B cell (primary cell): ENCODE measurements at regions of chr13 and their contacts with region 1.

Region 1: GRCh38 chr13:99374994-99375737 is 68.0 kb upstream of the GPR183 start:
- DNase-seq: peak; percentile 96
- ATAC-seq: peak; percentile 78
- H3K4me3 ChIP-seq: peak overlapping the region in 4 of 5 experiments; percentile 9 to 42 (median 34)
- H3K4me3 Mint-ChIP-seq: peak overlapping the region; percentile 77
- H3K27ac ChIP-seq: peak overlapping the region; percentile 99 to 100
- H3K27ac Mint-ChIP-seq: peak overlapping the region; percentile 98
- H3K4me1 ChIP-seq: peaks cover 77 to 90% of the 10 kb centered on the region in 2 donors
- H3K4me1 Mint-ChIP-seq: peaks cover 86% of the 10 kb centered on the region
- H3K27me3 ChIP-seq: no peaks in the 10 kb centered on the region
- H3K27me3 Mint-ChIP-seq: no peaks in the 10 kb centered on the region
- CTCF ChIP-seq: no peak

Region 2: DNA sequence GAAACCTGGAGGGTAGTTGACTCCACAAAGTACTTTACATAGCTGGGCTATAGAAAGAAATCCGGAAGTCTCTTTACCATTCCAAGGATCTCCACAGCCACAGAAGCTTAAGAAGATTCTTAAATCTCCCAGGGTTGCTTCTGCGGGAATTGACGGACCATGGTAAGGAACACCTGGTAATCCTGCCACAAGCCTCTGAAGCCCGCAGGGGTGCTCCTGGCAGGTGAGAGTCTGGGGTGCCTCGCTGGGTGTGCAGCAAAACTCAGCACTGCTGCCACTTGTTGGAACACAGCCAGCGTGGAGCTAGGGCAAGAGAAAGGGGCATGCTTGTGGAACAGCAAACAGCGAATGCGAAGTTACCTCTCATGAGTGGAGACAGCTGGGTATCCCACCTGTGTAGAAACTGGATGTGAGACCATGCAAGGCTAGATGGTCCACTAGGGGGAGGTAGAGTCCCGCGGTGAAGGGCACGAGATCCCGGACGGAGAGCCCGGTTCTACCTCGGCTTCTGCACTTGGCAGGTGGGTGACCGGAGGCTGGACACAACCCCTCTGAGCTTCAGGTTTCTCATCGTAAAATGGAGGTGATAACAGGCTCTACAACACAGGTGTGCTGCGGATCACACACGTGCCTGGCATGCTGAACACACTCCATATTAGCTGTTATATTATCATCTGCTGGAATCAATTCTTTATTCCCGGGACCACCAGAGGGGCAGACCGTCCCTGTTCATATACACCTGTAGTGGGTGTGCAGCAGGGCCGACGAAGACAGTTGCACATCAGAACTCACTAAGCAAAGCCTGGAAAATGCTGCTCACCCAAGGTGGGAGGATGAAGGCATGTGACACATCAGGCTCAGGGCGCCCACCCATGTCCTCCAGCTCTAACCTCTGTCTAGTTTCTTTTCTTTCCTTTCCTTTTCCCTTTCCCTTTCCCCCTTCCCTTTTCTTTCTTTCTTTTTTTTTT is 198.6 kb before region 1 on chr13:
- CTCF ChIA-PET with region 1: interaction called, 13 read pairs
- POLR2A ChIA-PET with region 1: interaction called, 3 read pairs
- intact Hi-C with region 1: no loop called
- DNase-seq: peak; percentile 88
- ATAC-seq: peak; percentile 84
- H3K4me3 ChIP-seq: no peak overlapping the region
- H3K4me3 Mint-ChIP-seq: peak overlapping the region; percentile 58
- H3K27ac ChIP-seq: no peak overlapping the region
- H3K27ac Mint-ChIP-seq: peak overlapping the region; percentile 72
- H3K4me1 ChIP-seq: peaks cover 37 to 43% of the 10 kb centered on the region in 2 donors
- H3K4me1 Mint-ChIP-seq: peaks cover 39% of the 10 kb centered on the region
- H3K27me3 ChIP-seq: no peaks in the 10 kb centered on the region
- H3K27me3 Mint-ChIP-seq: no peaks in the 10 kb centered on the region
- CTCF ChIP-seq: peak; percentile 96

Region 3: GRCh38 chr13:99296398-99296797 is 78.8 kb before region 1 on chr13:
- CTCF ChIA-PET with region 1: interaction called, 10 read pairs
- POLR2A ChIA-PET with region 1: interaction called, 13 read pairs
- intact Hi-C with region 1: no loop called
- DNase-seq: peak; percentile 45
- ATAC-seq: no peak
- H3K4me3 ChIP-seq: peak overlapping the region in 3 of 5 experiments; percentile 2 to 47 (median 17)
- H3K4me3 Mint-ChIP-seq: peak overlapping the region; percentile 72
- H3K27ac ChIP-seq: peak overlapping the region; percentile 32 to 78
- H3K27ac Mint-ChIP-seq: peak overlapping the region; percentile 59
- H3K4me1 ChIP-seq: peaks cover 73 to 81% of the 10 kb centered on the region in 2 donors
- H3K4me1 Mint-ChIP-seq: peaks cover 82% of the 10 kb centered on the region
- H3K27me3 ChIP-seq: no peaks in the 10 kb centered on the region
- H3K27me3 Mint-ChIP-seq: no peaks in the 10 kb centered on the region
- CTCF ChIP-seq: no peak

Region 4: DNA sequence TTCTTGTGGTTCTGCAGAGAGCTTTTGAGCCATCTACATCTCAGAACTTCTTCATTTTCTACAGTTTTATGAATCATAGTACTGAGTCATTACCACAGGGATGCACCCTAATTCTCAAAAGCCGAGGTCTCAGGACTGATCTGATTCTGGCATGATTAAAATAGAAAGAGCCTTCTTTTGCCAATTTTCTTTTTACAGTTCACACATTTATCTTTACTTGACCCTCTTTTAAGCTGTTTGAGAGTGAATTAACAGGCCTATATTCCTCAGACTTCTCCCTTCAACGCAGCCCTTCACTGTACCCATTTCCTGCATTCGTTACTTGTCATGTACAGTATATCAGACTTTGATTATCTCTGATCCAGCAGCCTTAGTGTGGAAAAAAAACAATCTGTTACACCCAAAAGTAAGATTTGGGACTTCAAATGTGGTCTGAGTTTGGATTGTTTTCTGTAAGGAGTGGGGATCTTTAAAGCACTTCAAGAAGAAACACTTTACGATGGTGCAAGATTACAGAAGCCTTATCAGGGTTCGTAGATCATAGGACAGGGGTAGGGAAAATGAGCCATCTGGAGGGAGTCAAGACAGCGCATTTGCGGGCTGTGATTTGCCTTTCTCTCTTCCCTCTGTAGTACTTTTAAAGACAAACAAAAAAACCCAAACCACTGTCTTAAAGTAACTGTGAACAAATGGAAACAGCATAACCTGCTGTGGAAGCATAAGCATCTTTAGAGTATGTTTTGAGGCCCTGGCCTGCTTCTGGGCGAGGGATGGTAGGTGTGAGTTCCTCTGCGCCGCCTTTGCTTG is 52.7 kb before region 1 on chr13:
- CTCF ChIA-PET with region 1: interaction called, 10 read pairs
- POLR2A ChIA-PET with region 1: interaction called, 8 read pairs
- intact Hi-C with region 1: loop called (anchors 2 kb)
- DNase-seq: peak; percentile 46
- ATAC-seq: peak; percentile 78
- H3K4me3 ChIP-seq: no peak overlapping the region
- H3K4me3 Mint-ChIP-seq: peak overlapping the region; percentile 77
- H3K27ac ChIP-seq: peak overlapping the region; percentile 56 to 73
- H3K27ac Mint-ChIP-seq: peak overlapping the region; percentile 91
- H3K4me1 ChIP-seq: peaks cover 43 to 49% of the 10 kb centered on the region in 2 donors
- H3K4me1 Mint-ChIP-seq: peaks cover 58% of the 10 kb centered on the region
- H3K27me3 ChIP-seq: no peaks in the 10 kb centered on the region
- H3K27me3 Mint-ChIP-seq: no peaks in the 10 kb centered on the region
- CTCF ChIP-seq: no peak

Region 5: DNA sequence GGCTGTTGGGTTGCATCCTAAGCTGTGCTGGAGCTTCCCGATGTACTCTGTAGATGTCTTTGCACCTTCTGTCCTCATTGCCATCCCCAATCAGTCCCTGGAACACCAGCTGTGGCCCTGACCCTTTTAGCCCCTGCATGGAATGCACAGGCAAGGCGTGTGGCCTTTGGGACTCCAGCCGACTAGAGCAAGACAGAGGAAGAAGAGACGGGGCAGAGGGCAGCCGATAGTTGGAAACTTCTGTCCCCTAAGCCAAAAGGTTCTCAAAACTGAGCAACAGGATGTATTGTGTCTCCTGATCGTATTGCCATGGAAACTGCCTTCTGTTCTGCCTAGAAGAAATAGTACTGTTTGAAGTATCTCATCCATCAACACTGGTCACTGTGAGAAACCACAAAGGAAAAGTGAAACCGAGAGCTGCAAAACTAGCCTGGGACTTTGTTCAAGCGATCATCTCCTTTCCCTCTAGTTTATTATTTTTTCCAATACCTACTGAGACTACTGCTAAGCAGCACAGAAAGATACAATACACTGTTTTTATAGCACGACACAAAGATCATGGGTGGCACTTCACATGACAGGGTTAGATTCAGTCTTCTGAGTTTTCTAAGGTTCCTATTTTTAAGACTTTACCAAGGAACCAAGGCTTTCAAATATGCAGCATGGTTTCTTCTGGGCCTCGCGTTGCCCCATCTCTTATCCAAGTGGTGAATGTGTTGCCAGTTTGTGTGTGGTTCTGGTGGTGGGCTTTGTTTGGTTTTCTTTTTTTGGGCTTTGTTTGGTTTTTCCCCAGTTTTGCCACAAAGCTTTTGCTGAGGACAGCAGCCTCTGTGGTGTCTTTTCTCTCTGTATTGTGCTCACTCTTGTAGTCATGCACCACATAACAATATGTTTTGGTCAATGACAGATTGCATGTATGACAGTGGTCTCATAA is 18.7 kb before region 1 on chr13:
- CTCF ChIA-PET with region 1: interaction called, 17 read pairs
- POLR2A ChIA-PET with region 1: interaction called, 28 read pairs
- intact Hi-C with region 1: loop called (anchors 1 kb)
- DNase-seq: peak; percentile 91
- ATAC-seq: peak; percentile 60
- H3K4me3 ChIP-seq: peak overlapping the region in 4 of 5 experiments; percentile 13 to 47 (median 28)
- H3K4me3 Mint-ChIP-seq: peak overlapping the region; percentile 78
- H3K27ac ChIP-seq: peak overlapping the region; percentile 95 to 97
- H3K27ac Mint-ChIP-seq: peak overlapping the region; percentile 98
- H3K4me1 ChIP-seq: peaks cover 73 to 92% of the 10 kb centered on the region in 2 donors
- H3K4me1 Mint-ChIP-seq: peaks cover 96% of the 10 kb centered on the region
- H3K27me3 ChIP-seq: no peaks in the 10 kb centered on the region
- H3K27me3 Mint-ChIP-seq: no peaks in the 10 kb centered on the region
- CTCF ChIP-seq: no peak

Region 6: GRCh38 chr13:99425485-99426341 is 50.5 kb after region 1 on chr13:
- CTCF ChIA-PET with region 1: interaction called, 18 read pairs
- POLR2A ChIA-PET with region 1: interaction called, 3 read pairs
- intact Hi-C with region 1: loop called (anchors 1 kb)
- DNase-seq: peak; percentile 80
- ATAC-seq: peak; percentile 59
- H3K4me3 ChIP-seq: peak overlapping the region in 3 of 5 experiments; percentile 21 to 58 (median 41)
- H3K4me3 Mint-ChIP-seq: peak overlapping the region; percentile 72
- H3K27ac ChIP-seq: peak overlapping the region; percentile 92 to 96
- H3K27ac Mint-ChIP-seq: peak overlapping the region; percentile 93
- H3K4me1 ChIP-seq: peaks cover 65 to 79% of the 10 kb centered on the region in 2 donors
- H3K4me1 Mint-ChIP-seq: peaks cover 71% of the 10 kb centered on the region
- H3K27me3 ChIP-seq: no peaks in the 10 kb centered on the region
- H3K27me3 Mint-ChIP-seq: no peaks in the 10 kb centered on the region
- CTCF ChIP-seq: no peak

Region 7: DNA sequence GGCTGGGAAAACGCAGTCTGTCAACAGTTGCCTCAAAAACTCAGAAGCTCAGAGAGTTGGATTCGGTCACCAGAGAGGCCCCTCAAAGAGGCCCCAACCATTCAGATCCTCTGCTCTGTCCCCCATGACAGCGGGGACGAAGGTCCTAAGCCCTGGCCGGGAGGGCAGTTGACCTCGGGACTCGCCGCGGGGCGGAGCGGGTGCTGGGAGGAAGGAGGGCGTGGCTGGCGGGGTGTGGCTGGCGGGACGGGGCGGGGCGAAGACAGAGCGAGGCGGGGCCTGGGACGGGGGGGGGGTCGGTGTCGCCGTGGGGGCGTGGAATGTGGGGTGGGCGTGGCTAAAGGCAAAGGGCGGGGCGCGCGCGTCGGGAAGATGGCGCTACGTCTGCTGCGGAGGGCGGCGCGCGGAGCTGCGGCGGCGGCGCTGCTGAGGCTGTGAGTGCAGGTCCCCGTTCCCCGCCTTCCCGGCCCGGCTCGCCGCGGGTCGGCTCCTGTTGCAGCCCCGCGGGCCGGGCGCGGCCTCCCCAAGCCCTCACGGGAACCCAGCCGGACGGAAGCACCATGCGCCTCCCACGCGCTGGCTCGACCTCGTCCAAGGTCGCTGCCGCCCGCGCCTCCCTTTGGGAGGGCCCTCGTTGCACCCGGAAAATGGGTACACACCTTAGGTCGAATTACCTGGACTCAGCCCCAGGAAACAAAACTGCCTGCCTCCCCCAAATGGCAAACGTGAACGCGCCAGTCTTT is 231.3 kb after region 1 on chr13:
- CTCF ChIA-PET with region 1: no interaction called
- POLR2A ChIA-PET with region 1: interaction called, 3 read pairs
- intact Hi-C with region 1: loop called (anchors 5 kb)
- DNase-seq: peak; percentile 93
- ATAC-seq: peak; percentile 90
- H3K4me3 ChIP-seq: peak within 1 kb of the TSS; percentile 70 to 98 (median 86)
- H3K4me3 Mint-ChIP-seq: peak within 1 kb of the TSS; percentile 98
- H3K27ac ChIP-seq: peak within 1 kb of the TSS; percentile 68 to 74
- H3K27ac Mint-ChIP-seq: peak within 1 kb of the TSS; percentile 90
- H3K4me1 ChIP-seq: peaks cover 8 to 21% of the 10 kb centered on the region in 2 donors
- H3K4me1 Mint-ChIP-seq: peaks cover 37% of the 10 kb centered on the region
- H3K27me3 ChIP-seq: no peaks in the 10 kb centered on the region
- H3K27me3 Mint-ChIP-seq: no peaks in the 10 kb centered on the region
- CTCF ChIP-seq: no peak